Heart right ventricle (tissue), 16 donors: ENCODE measurements at regions of chr2 and their contacts with region 1.

Region 1: GRCh38 chr2:127174136-127174535 is 46.0 kb downstream of the CYP27C1 start:
- DNase-seq: peak in 1 of 2 donors; percentile 21
- ATAC-seq: peak in 5 of 8 donors; percentile 9 to 63 (median 47)
- H3K4me3 ChIP-seq: no peak overlapping the region
- H3K27ac ChIP-seq: no peak overlapping the region
- H3K4me1 ChIP-seq: peaks cover 0 to 43% (median 25%) of the 10 kb centered on the region in 9 donors
- H3K27me3 ChIP-seq: peaks cover 0 to 9% (median 0%) of the 10 kb centered on the region in 7 donors
- CTCF ChIP-seq: peak in 6 of 9 donors; percentile 27 to 51 (median 40)

Region 2: GRCh38 chr2:126436411-126436810 is 737.7 kb before region 1 on chr2:
- intact Hi-C with region 1: no loop called
- DNase-seq: no peak
- ATAC-seq: no peak
- H3K4me3 ChIP-seq: no peak overlapping the region
- H3K27ac ChIP-seq: no peak overlapping the region
- H3K4me1 ChIP-seq: no peaks in the 10 kb centered on the region
- H3K27me3 ChIP-seq: peaks cover 0 to 3% (median 0%) of the 10 kb centered on the region in 7 donors
- CTCF ChIP-seq: no peak

Region 3: DNA sequence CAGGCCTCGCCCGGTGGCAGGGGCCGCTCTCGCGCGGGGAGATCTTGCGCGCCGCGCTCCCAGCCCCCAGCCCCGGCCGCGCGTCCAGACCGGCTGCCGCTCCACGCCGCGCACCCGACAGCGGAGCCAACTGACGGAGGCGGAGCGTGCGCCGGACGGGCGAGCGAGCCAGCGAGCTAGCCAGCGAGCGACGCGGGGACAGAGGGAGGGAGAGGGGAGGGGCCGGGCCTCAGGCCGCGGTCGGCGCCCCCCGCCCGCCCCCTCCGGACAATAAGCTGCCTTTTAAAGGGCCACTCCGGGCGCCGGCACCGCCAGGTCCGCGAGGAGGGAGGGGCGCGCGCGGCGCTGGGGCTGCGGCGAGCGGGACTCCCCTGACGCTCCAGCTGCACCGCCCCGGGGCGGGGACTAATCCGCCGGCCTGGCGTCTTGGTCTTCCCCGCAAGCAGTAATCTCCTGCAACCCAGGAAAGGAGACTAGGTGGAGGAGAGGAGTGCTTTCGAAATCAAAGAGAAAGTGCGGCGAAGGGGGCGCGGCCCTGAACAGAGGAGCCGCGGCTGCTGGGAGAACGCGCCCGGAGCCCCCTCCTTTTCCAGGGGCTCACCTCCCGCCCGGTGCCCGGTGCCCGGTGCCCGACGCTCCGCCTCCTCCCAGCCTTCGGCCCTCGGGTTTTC is 67.0 kb before region 1 on chr2 and contains the start of gene BIN1:
- intact Hi-C with region 1: loop called in 1 of 10 experiments (anchors 5 kb)
- DNase-seq: peak; percentile 86 to 90
- ATAC-seq: peak; percentile 85 to 90 (median 88)
- H3K4me3 ChIP-seq: peak within 1 kb of the TSS; percentile 51 to 84 (median 74)
- H3K27ac ChIP-seq: peak within 1 kb of the TSS in 9 of 10 donors; percentile 50 to 87 (median 74)
- H3K4me1 ChIP-seq: peaks cover 0 to 41% (median 15%) of the 10 kb centered on the region in 9 donors
- H3K27me3 ChIP-seq: peaks cover 0 to 14% (median 0%) of the 10 kb centered on the region in 7 donors
- CTCF ChIP-seq: no peak
- total RNA-seq, gene BIN1: 11.9 to 21.7 (median 16.5) TPM